ENCODE measurements at regions of chr10 and their contacts with region 1.

Region 1: GRCh38 chr10:27504007-27504807 is at the start of gene RAB18:
- DNase-seq: peak; percentile 98
- H3K4me3 ChIP-seq: peak within 1 kb of the TSS; percentile 63 to 93 (median 82)
- H3K27ac ChIP-seq: peak within 1 kb of the TSS; percentile 93 to 94 (median 94)
- H3K4me1 ChIP-seq: peaks cover 8 to 29% (median 17%) of the 10 kb centered on the region in 4 donors
- H3K27me3 ChIP-seq: no peaks in the 10 kb centered on the region
- CTCF ChIP-seq: no peak
- EP300 ChIP-seq: no peak
- POLR2A ChIP-seq: peak; percentile 94
- total RNA-seq, gene RAB18: 13.1 to 84.5 (median 36.4) TPM

Region 2: DNA sequence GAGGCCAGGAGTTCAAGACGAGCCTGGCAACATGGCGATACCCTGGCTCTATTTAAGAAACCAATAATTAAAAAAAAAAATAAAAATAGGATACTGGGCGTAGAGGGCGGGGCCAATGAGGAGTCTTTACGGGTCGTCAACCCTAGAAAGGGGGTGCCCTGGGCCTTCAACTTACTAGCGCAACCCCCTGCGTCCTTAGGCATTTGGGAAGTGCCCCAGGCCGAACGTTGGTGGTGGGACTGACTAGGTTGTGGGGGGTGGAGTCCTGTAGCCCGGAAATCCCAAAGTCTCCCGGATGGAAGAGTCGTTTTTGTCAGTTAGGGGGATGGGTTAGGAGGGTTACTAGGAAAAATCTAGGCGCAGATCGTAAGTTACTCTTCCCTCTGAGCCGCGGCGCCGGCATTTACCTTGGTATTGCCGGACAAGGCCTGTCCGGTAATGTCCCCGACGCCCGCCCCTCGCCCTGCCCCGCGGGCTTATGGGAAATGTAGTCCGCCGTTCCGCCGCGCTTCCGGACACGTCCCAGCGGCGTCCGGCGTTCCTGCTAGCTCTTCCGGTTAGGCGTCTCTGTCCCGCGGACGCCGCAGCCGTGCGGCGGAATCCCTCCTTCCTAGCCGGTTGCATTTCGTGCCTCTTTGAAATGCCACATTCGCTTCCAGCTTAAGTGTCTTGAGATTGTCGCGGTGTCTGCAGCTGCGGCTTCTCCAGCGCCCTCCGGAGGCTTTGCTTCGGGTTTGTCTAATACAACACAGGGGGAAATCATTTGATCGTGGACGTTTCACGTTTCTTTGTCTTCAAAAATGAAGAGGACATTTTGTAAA is 262.3 kb before region 1 on chr10:
- in situ Hi-C with region 1: loop called in 1 of 4 experiments (anchors 25 kb)
- intact Hi-C with region 1: no loop called
- DNase-seq: peak; percentile 94
- H3K4me3 ChIP-seq: peak overlapping the region; percentile 60 to 79 (median 66)
- H3K27ac ChIP-seq: peak overlapping the region; percentile 95 to 99 (median 99)
- H3K4me1 ChIP-seq: peaks cover 15 to 43% (median 30%) of the 10 kb centered on the region in 4 donors
- H3K27me3 ChIP-seq: no peaks in the 10 kb centered on the region
- CTCF ChIP-seq: peak; percentile 15 to 64 (median 21)
- EP300 ChIP-seq: no peak
- POLR2A ChIP-seq: peak; percentile 96

Region 3: GRCh38 chr10:27410152-27410551 is 94.1 kb before region 1 on chr10:
- in situ Hi-C with region 1: no loop called
- intact Hi-C with region 1: no loop called
- DNase-seq: no peak
- H3K4me3 ChIP-seq: no peak overlapping the region
- H3K27ac ChIP-seq: no peak overlapping the region
- H3K4me1 ChIP-seq: no peaks in the 10 kb centered on the region
- H3K27me3 ChIP-seq: peaks cover 4% of the 10 kb centered on the region
- CTCF ChIP-seq: no peak
- EP300 ChIP-seq: no peak
- POLR2A ChIP-seq: no peak

Region 4: GRCh38 chr10:28532383-28533175 is 1028.4 kb after region 1 on chr10 and contains the start of gene WAC:
- in situ Hi-C with region 1: loop called in 1 of 4 experiments (anchors 25 kb)
- intact Hi-C with region 1: no loop called
- DNase-seq: peak; percentile 97
- H3K4me3 ChIP-seq: peak within 1 kb of the TSS; percentile 65 to 99 (median 90)
- H3K27ac ChIP-seq: peak within 1 kb of the TSS; percentile 97 to 99 (median 98)
- H3K4me1 ChIP-seq: peaks cover 4 to 45% (median 25%) of the 10 kb centered on the region in 4 donors
- H3K27me3 ChIP-seq: no peaks in the 10 kb centered on the region
- CTCF ChIP-seq: peak in 1 of 5 experiments; percentile 40
- EP300 ChIP-seq: no peak
- POLR2A ChIP-seq: peak; percentile 90
- total RNA-seq, gene WAC: 66.6 to 102 (median 78.9) TPM